ENCODE measurements at regions of chr17 and their contacts with region 1.

Region 1: GRCh38 chr17:794876-795275 is 12.7 kb downstream of the MRM3 start:
- DNase-seq: peak; percentile 87 to 93 (median 90)
- H3K4me3 ChIP-seq: peak overlapping the region; percentile 2 to 54 (median 46)
- H3K27ac ChIP-seq: no peak overlapping the region
- H3K4me1 ChIP-seq: no peaks in the 10 kb centered on the region
- H3K27me3 ChIP-seq: no peaks in the 10 kb centered on the region
- CTCF ChIP-seq: peak; percentile 79

Region 2: DNA sequence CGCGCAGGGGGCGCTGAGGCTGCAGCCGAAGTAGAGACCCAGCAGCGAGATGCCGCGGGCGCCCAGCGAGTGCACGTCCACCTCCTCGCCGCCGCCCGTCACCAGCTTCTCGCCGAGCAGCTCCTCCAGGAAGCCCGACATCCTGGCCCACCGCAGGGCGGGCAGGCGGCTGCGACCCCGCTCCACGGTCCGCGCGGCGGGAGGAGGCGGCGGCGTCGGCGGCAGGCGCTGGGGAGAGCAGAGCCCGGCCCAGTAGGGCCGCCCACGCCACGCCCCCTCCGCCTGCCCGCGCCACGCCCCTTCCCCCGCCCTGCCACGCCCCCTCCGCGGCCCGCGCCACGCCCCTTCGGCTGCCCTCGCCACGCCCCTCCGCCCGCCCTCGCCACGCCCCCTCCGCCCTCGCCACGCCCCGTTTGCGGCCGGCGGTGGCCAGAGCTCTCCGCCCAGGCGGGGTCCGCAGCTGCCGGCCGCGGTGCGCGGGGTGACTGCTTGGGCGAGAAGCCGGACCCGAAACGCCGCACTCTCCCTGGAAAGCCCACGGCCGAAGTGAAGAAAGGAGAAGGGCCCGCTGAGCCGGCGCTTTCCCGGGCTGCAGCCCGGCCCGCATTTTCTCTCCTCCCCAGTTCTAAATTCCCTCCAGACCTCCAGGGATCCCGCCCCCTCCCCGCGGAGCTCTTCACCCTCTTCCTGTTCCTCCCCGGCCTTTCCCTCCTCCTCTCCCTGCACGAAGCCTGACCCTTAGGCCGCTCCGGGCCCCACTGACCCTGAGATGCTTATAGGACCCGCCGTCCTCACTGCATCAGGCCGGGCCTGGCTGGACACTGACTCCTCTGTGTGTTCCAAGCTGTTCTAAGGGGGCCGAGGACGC is 184.9 kb after region 1 on chr17 and contains the start of gene NXN:
- intact Hi-C with region 1: loop called (anchors 10 kb)
- DNase-seq: peak; percentile 81 to 97 (median 93)
- H3K4me3 ChIP-seq: peak within 1 kb of the TSS; percentile 16 to 58 (median 44)
- H3K27ac ChIP-seq: peak within 1 kb of the TSS; percentile 67 to 86
- H3K4me1 ChIP-seq: peaks cover 0 to 8% (median 0%) of the 10 kb centered on the region in 3 donors
- H3K27me3 ChIP-seq: no peaks in the 10 kb centered on the region
- CTCF ChIP-seq: no peak
- total RNA-seq, gene NXN: 26.8 TPM

Region 3: DNA sequence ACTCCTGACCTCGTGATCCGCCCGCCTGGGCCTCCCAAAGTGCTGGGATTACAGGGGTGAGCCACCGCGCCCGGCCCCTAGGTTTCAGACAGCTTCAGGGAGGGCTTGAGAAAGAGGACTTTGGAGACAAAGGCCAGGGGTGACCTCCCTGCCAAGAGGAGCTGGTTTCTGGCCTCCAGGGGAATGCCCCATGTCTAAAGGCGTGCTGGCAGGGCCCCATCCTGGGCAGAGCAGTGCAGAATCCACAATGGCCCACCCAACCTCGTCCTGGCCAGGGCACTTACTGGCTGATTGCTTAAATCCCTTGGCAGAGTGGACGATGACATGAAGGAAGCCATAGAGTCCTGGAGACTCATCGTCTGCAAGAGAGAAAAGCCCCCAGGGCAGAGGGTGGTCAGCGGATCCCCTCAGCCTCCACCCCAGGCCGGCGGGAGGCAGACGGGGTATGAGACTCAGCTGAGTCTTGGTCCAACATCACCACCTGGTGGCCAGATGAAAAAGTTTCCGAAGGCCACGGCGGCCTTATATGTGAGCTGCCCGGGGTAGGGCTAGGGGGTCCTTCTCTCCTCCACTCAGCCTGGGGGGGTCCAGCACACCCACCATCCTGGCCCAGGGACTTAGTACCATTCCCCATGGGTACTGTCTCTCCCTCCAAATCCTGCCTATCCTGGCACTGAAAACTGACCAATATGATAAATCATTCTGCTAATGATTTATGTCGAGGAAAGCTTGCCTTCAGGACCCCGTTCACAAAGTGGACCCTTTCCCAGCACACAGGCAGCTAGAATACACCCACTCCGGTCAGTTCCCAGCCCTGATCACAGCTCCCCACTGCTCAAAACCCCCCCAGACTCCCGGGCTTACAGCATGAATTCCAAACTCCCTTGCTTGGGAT is 261.1 kb after region 1 on chr17:
- intact Hi-C with region 1: loop called (anchors 10 kb)
- DNase-seq: peak; percentile 82 to 86 (median 83)
- H3K4me3 ChIP-seq: no peak overlapping the region
- H3K27ac ChIP-seq: no peak overlapping the region
- H3K4me1 ChIP-seq: no peaks in the 10 kb centered on the region
- H3K27me3 ChIP-seq: no peaks in the 10 kb centered on the region
- CTCF ChIP-seq: peak; percentile 75